PC-9 (cell line): ENCODE measurements at regions of chr16 and their contacts with region 1.

Region 1: DNA sequence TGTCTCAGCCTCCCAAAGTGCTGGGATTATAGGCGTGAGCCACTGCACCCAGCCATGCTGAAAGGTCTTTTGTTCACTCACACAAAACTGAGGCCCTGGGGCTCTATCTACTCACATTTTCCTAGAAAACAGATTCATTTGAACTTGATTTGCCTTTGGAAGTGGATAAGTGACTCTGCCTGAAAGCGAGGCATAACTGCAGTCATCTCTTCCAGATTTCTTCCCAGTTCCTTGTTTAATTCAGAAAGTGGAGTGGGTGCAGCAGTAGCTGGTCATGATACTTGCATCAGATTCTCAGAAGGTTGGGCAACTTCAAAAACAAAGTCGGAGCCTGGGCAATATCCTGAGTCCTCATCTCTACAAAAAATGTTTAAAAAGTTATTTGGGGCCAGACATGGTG is 58.8 kb upstream of the FA2H start:
- DNase-seq: no peak
- H3K4me3 ChIP-seq: no peak overlapping the region
- H3K27ac ChIP-seq: no peak overlapping the region
- H3K4me1 ChIP-seq: no peaks in the 10 kb centered on the region
- H3K27me3 ChIP-seq: no peaks in the 10 kb centered on the region
- CTCF ChIP-seq: no peak

Region 2: DNA sequence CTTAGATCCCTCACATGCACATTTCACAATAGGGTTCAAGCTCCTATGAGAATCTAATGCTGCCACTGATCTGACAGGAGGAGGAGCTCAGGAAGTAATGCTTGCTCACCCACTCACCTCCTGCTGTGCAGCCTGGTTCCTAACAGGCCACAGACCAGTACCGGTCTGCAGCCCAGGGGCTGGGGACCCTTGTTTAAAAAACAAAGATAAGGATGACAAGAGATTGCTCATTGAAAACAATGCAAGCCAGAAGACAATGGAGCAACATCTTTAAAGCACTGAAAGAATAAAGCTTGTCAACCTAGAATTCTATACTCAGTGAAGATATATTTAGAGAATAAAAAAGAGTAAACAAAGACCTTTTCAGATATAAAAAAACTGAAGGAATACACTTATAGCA is 36.0 kb before region 1 on chr16:
- CTCF ChIA-PET with region 1: no interaction called
- POLR2A ChIA-PET with region 1: no interaction called
- intact Hi-C with region 1: no loop called
- DNase-seq: no peak
- H3K4me3 ChIP-seq: no peak overlapping the region
- H3K27ac ChIP-seq: no peak overlapping the region
- H3K4me1 ChIP-seq: 0 out of 2 replicates have a peak, but pooled peaks cover 4% of the 10 kb centered on the region
- H3K27me3 ChIP-seq: 0 out of 2 replicates have a peak, but pooled peaks cover 7% of the 10 kb centered on the region
- CTCF ChIP-seq: no peak

Region 3: DNA sequence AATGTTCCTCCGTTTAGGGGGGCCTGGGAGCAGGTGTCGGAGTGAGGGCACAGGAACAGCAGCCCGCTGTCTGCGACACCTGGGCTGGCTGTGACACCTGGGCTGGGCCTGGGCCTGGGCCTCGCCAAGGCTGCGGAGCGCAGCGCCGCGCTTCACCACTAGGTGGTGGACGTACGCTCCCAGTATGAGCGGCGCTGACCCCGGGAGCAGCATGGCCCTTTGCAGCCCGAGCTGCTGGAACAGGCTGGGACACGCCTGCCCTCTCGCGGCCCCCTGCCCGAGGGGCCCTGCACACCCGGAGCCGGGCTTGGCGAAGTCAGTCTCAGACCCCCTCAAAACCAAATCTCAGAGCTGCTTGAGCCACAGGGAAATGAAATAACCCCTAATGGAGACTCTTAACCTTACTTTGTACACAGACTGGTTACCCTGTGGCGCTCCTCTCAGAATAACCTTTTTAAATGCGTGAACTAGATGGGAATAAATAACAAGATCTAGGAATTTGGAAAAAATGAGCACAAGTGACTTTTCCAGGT is 20.2 kb before region 1 on chr16:
- CTCF ChIA-PET with region 1: no interaction called
- POLR2A ChIA-PET with region 1: no interaction called
- intact Hi-C with region 1: no loop called
- DNase-seq: peak; percentile 60 to 85
- H3K4me3 ChIP-seq: no peak overlapping the region; the same call in 1 of the 2 replicates
- H3K27ac ChIP-seq: no peak overlapping the region
- H3K4me1 ChIP-seq: no peaks in the 10 kb centered on the region
- H3K27me3 ChIP-seq: no peaks in the 10 kb centered on the region
- CTCF ChIP-seq: peak; percentile 93

Region 4: GRCh38 chr16:74843719-74844433 is 10.5 kb after region 1 on chr16:
- CTCF ChIA-PET with region 1: interaction called, 17 read pairs
- POLR2A ChIA-PET with region 1: no interaction called
- intact Hi-C with region 1: no loop called
- DNase-seq: peak; percentile 12 to 49
- H3K4me3 ChIP-seq: peak overlapping the region; percentile 6; the same call in 1 of the 2 replicates
- H3K27ac ChIP-seq: peak overlapping the region; percentile 68
- H3K4me1 ChIP-seq: peaks cover 12% of the 10 kb centered on the region; the same call in 1 of the 2 replicates
- H3K27me3 ChIP-seq: no peaks in the 10 kb centered on the region
- CTCF ChIP-seq: no peak